Activated CD8-positive, alpha-beta memory T cell treated with anti-CD3 and anti-CD28 coated beads, Interleukin-2, amount 10 ng/mL, durations not matched to agents 7 days and 5 days (primary cell): ENCODE measurements at regions of chr12 and their contacts with region 1.

Region 1: GRCh38 chr12:51591020-51591901 is at the start of gene SCN8A:
- DNase-seq: peak; percentile 56
- ATAC-seq: peak; percentile 70
- H3K4me3 Mint-ChIP-seq: peak within 1 kb of the TSS; percentile 78
- H3K27ac Mint-ChIP-seq: peak within 1 kb of the TSS; percentile 21
- H3K4me1 Mint-ChIP-seq: peaks cover 16% of the 10 kb centered on the region
- H3K27me3 Mint-ChIP-seq: peaks cover 65% of the 10 kb centered on the region
- total RNA-seq, gene SCN8A: 1.3 to 2.3 TPM

Region 2: DNA sequence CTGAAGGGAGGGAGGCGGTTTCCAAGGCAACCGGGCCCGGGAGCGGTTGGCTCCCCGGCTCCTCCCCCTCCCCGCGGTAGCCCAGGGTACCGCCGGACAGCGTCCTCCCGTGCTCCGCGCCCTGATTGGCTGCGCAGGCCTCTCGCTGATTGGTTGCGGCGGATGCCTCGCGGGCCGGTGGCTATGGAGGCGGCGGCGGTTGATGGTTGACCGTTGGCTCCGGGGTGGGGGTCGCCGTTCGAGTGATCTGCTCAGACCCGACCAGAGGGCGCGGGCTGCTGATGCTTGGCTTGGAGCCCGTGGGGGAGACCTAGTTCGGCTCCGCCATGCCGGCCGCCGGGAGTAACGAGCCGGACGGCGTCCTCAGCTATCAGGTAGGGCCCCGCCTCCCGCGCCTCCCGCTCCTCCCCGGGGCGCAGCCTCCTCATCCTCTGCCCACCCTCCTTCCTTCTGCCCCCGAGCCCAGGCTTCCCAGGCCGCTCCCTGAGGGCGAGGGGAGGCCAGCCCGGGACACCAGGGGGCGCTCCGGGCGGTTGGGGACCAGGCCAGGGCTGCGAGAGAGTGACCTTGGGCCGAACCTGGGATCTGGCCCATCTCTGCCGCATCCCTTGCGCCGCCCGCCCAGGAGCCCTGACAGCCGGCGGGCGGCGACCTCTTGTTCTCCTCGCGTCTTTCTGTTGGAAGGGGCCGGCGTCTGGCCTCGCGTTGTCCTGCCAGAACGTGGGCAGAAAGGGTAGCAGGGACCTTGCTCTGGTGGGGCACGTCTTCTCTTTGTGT is 166.4 kb before region 1 on chr12 and contains the start of gene SLC4A8:
- CTCF ChIA-PET with region 1: interaction called, 18 read pairs
- DNase-seq: peak; percentile 91
- ATAC-seq: peak; percentile 94
- H3K4me3 Mint-ChIP-seq: peak within 1 kb of the TSS; percentile 76
- H3K27ac Mint-ChIP-seq: peak within 1 kb of the TSS; percentile 30
- H3K4me1 Mint-ChIP-seq: peaks cover 14% of the 10 kb centered on the region
- H3K27me3 Mint-ChIP-seq: peaks cover 6% of the 10 kb centered on the region
- total RNA-seq, gene SLC4A8: 9.1 to 9.2 TPM

Region 3: GRCh38 chr12:51525518-51525917 is 65.7 kb before region 1 on chr12:
- CTCF ChIA-PET with region 1: no interaction called
- DNase-seq: no peak
- ATAC-seq: no peak
- H3K4me3 Mint-ChIP-seq: no peak overlapping the region
- H3K27ac Mint-ChIP-seq: no peak overlapping the region
- H3K4me1 Mint-ChIP-seq: no peaks in the 10 kb centered on the region
- H3K27me3 Mint-ChIP-seq: peaks cover 7% of the 10 kb centered on the region

Region 4: GRCh38 chr12:51621156-51621922 is 30.1 kb after region 1 on chr12:
- CTCF ChIA-PET with region 1: no interaction called
- DNase-seq: no peak
- ATAC-seq: no peak
- H3K4me3 Mint-ChIP-seq: no peak overlapping the region
- H3K27ac Mint-ChIP-seq: no peak overlapping the region
- H3K4me1 Mint-ChIP-seq: no peaks in the 10 kb centered on the region
- H3K27me3 Mint-ChIP-seq: peaks cover 17% of the 10 kb centered on the region